HCT116 (cell line): ENCODE measurements at regions of chr5 and their contacts with region 1.

Region 1: DNA sequence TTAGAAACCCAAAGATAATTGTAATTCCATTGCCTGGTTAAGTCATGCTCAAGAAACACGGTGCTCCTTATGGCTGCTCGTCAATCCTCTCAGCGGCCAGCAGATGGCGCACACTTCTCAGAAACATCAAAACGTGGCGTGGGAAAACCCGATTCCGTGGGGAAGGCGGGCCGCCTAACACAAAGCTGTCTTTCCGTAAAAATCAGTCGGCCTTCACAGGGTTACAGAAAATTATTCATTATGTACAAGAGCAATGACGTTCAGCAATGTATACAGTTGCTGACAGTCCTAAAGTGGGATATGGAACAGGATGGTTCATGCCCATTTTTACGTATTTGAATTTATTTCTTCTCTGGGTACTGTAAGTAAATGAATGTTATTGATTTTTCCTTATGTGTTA is 83.5 kb downstream of the PDE4D start:
- DNase-seq: peak; percentile 56
- ATAC-seq: peak; percentile 80
- H3K4me3 ChIP-seq: no peak overlapping the region
- H3K27ac ChIP-seq: no peak overlapping the region
- H3K4me1 ChIP-seq: no peaks in the 10 kb centered on the region
- H3K27me3 ChIP-seq: peaks cover 13% of the 10 kb centered on the region
- CTCF ChIP-seq: peak; percentile 45 to 92 (median 85); a peak in 5 of 6 replicates
- POLR2A ChIP-seq: no peak
- RAD21 ChIP-seq: peak; percentile 65

Region 2: GRCh38 chr5:59598547-59598874 is 211.5 kb before region 1 on chr5:
- CTCF ChIA-PET with region 1: no interaction called
- POLR2A ChIA-PET with region 1: no interaction called
- RAD21 ChIA-PET with region 1: no interaction called
- intact Hi-C with region 1: no loop called
- DNase-seq: no peak
- ATAC-seq: no peak
- H3K4me3 ChIP-seq: no peak overlapping the region
- H3K27ac ChIP-seq: no peak overlapping the region
- H3K4me1 ChIP-seq: no peaks in the 10 kb centered on the region
- H3K27me3 ChIP-seq: peaks cover 16% of the 10 kb centered on the region
- CTCF ChIP-seq: no peak
- POLR2A ChIP-seq: no peak
- RAD21 ChIP-seq: no peak

Region 3: GRCh38 chr5:60161340-60161934 is 351.4 kb after region 1 on chr5:
- CTCF ChIA-PET with region 1: no interaction called
- POLR2A ChIA-PET with region 1: no interaction called
- RAD21 ChIA-PET with region 1: no interaction called
- intact Hi-C with region 1: loop called (anchors 5 kb)
- DNase-seq: peak; percentile 8
- ATAC-seq: peak; percentile 42; the same call in 1 of the 2 replicates
- H3K4me3 ChIP-seq: no peak overlapping the region
- H3K27ac ChIP-seq: no peak overlapping the region
- H3K4me1 ChIP-seq: no peaks in the 10 kb centered on the region
- H3K27me3 ChIP-seq: no peaks in the 10 kb centered on the region
- CTCF ChIP-seq: peak; percentile 14 to 55 (median 48); a peak in 4 of 6 replicates
- POLR2A ChIP-seq: no peak
- RAD21 ChIP-seq: peak; percentile 37

Region 4: DNA sequence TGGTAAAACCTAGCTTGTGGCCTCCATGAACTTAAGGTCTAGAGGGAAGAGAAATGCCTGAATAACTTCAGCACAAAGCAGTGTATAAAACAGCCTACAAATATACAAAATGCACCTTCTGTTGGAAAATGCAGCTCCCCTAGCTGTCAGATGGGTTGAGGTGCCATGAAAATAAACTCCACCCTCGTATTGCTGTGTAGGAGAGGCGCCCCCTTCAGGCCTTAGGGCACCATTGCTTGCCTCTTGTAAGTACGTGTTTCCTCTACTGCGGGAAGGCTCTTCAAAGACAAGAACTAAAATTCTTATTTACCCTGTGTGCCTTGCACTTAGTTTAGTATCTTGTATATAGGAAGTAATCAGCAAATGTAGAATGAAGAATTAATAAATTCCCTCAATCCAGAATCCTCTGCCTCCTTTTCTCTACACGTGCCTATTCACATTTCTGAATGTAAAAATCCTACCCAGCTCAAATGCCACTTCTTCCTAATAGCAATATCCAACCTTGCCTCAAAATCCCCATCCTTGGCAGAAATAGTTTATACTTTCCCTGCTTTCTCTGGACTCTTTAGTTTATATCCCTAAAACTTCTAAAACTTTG is 477.2 kb after region 1 on chr5:
- CTCF ChIA-PET with region 1: interaction called, 28 read pairs
- POLR2A ChIA-PET with region 1: no interaction called
- RAD21 ChIA-PET with region 1: interaction called, 3 to 4 read pairs
- intact Hi-C with region 1: loop called (anchors 1 kb)
- DNase-seq: peak; percentile 75
- ATAC-seq: peak; percentile 99
- H3K4me3 ChIP-seq: no peak overlapping the region
- H3K27ac ChIP-seq: no peak overlapping the region
- H3K4me1 ChIP-seq: no peaks in the 10 kb centered on the region
- H3K27me3 ChIP-seq: peaks cover 28% of the 10 kb centered on the region
- CTCF ChIP-seq: peak; percentile 88 to 99 (median 97)
- POLR2A ChIP-seq: no peak
- RAD21 ChIP-seq: peak; percentile 65

Region 5: DNA sequence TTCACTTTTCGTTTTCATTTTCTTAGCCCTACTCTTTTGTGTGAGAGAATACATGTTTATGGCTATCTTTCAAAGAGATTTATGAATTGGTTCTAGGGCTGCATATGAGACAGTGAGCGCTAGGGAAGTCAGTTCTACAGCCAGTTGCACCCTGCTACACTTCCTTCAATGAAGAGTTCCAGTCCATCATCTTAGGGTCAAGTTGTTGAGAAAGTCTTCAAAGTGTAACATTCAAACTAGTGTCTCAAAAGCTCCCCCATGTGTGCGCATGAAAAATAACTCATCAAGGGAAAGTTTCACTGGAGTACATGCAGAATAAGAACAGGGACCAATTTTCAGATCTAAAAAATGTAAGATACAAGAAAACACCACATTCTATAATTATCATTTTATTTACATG is 572.7 kb after region 1 on chr5:
- CTCF ChIA-PET with region 1: interaction called, 6 read pairs
- POLR2A ChIA-PET with region 1: no interaction called
- RAD21 ChIA-PET with region 1: no interaction called
- intact Hi-C with region 1: loop called (anchors 1 kb)
- DNase-seq: peak; percentile 12
- ATAC-seq: 0 out of 2 replicates have a peak, but pooled peaks have one; percentile 47
- H3K4me3 ChIP-seq: no peak overlapping the region
- H3K27ac ChIP-seq: no peak overlapping the region
- H3K4me1 ChIP-seq: no peaks in the 10 kb centered on the region
- H3K27me3 ChIP-seq: peaks cover 26% of the 10 kb centered on the region; the same call in 1 of the 2 replicates
- CTCF ChIP-seq: peak; percentile 13 to 26 (median 19); a peak in 3 of 6 replicates
- POLR2A ChIP-seq: no peak
- RAD21 ChIP-seq: peak; percentile 39; the same call in 1 of the 2 replicates

Region 6: DNA sequence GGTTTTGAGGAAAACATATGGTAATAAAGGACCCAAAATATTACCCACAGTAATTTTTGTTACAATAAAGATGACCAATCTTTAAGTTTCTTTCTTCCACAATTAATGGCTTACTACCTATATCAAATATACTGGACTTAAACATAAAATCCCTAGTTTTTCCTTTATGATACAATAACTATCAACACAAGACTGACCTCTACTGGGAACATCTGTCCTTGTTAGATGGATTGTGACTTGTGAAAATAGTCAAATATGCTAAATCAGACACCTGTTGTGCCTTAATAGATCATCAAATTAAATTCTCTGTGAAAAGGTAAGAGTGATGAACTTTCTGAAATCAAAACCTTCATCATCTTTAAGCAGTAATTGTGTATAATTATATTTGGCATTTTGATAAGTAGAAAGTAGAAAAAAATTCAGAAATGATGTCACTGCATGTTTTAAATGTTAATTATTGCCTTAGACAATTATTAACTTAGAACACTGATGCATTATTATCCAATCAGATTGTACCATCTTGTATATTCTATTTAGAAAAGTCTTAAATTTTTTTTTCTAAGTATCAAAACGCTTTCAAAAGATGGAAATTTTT is 776.4 kb after region 1 on chr5:
- CTCF ChIA-PET with region 1: no interaction called
- POLR2A ChIA-PET with region 1: no interaction called
- RAD21 ChIA-PET with region 1: no interaction called
- intact Hi-C with region 1: loop called (anchors 5 kb)
- DNase-seq: peak; percentile 2
- ATAC-seq: no peak
- H3K4me3 ChIP-seq: no peak overlapping the region
- H3K27ac ChIP-seq: no peak overlapping the region
- H3K4me1 ChIP-seq: no peaks in the 10 kb centered on the region
- H3K27me3 ChIP-seq: no peaks in the 10 kb centered on the region
- CTCF ChIP-seq: peak in 2 of 3 experiments; percentile 19 to 42; a peak in 3 of 6 replicates
- POLR2A ChIP-seq: no peak
- RAD21 ChIP-seq: peak; percentile 33; the same call in 1 of the 2 replicates

Region 7: GRCh38 chr5:60649283-60649917 is 839.4 kb after region 1 on chr5:
- CTCF ChIA-PET with region 1: interaction called, 3 read pairs
- POLR2A ChIA-PET with region 1: no interaction called
- RAD21 ChIA-PET with region 1: no interaction called
- intact Hi-C with region 1: loop called (anchors 1 kb)
- DNase-seq: peak; percentile 33
- ATAC-seq: peak; percentile 71
- H3K4me3 ChIP-seq: no peak overlapping the region
- H3K27ac ChIP-seq: no peak overlapping the region
- H3K4me1 ChIP-seq: peaks cover 0 to 9% of the 10 kb centered on the region in 2 experiments; a peak in 2 of 4 replicates
- H3K27me3 ChIP-seq: no peaks in the 10 kb centered on the region
- CTCF ChIP-seq: peak; percentile 61 to 73 (median 69); a peak in 5 of 6 replicates
- POLR2A ChIP-seq: no peak
- RAD21 ChIP-seq: peak; percentile 55

Region 8: DNA sequence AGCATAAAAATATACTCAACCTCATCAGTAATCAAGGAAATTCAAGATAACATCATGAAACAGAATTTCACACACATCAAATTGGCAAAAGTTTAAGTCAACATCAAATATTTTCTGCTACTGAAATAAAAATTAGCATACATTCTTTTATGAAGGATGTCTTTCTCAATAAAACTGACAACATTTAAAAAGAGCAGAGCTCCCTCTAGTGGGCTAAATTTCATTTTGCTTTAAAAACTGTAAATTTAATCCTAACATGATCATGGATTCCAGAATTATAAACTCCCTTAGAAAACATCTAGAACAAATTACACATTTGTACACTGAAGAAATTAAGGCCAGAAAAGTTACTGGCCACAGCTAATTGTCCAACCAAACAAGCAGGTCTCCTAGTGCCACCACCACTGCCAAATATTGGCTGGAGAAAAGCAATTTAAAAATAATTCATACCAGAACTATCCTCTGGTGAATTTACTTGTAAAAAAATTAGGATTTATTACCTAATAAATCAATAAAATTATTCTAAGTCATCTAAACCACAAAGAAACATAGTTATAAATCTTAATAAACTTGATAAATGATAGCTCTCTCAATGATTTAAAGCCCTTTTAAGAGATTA is 858.8 kb after region 1 on chr5:
- CTCF ChIA-PET with region 1: interaction called, 8 read pairs
- POLR2A ChIA-PET with region 1: no interaction called
- RAD21 ChIA-PET with region 1: no interaction called
- intact Hi-C with region 1: loop called (anchors 5 kb)
- DNase-seq: peak; percentile 31
- ATAC-seq: no peak
- H3K4me3 ChIP-seq: no peak overlapping the region
- H3K27ac ChIP-seq: no peak overlapping the region
- H3K4me1 ChIP-seq: no peaks in the 10 kb centered on the region
- H3K27me3 ChIP-seq: no peaks in the 10 kb centered on the region
- CTCF ChIP-seq: peak; percentile 36 to 75 (median 40); a peak in 4 of 6 replicates
- POLR2A ChIP-seq: no peak
- RAD21 ChIP-seq: peak; percentile 44; the same call in 1 of the 2 replicates